Activated B cell treated with CpG ODN at 0.5 μM for 24 hours (primary cell): ENCODE measurements at regions of chr9 and their contacts with region 1.

Region 1: GRCh38 chr9:34500623-34501267 is 22.0 kb downstream of the ENHO start:
- DNase-seq: peak; percentile 55
- ATAC-seq: peak; percentile 95
- H3K4me3 Mint-ChIP-seq: no peak overlapping the region
- H3K27ac Mint-ChIP-seq: no peak overlapping the region
- H3K4me1 Mint-ChIP-seq: no peaks in the 10 kb centered on the region
- H3K27me3 Mint-ChIP-seq: peaks cover 13% of the 10 kb centered on the region
- CTCF ChIP-seq: peak; percentile 75

Region 2: DNA sequence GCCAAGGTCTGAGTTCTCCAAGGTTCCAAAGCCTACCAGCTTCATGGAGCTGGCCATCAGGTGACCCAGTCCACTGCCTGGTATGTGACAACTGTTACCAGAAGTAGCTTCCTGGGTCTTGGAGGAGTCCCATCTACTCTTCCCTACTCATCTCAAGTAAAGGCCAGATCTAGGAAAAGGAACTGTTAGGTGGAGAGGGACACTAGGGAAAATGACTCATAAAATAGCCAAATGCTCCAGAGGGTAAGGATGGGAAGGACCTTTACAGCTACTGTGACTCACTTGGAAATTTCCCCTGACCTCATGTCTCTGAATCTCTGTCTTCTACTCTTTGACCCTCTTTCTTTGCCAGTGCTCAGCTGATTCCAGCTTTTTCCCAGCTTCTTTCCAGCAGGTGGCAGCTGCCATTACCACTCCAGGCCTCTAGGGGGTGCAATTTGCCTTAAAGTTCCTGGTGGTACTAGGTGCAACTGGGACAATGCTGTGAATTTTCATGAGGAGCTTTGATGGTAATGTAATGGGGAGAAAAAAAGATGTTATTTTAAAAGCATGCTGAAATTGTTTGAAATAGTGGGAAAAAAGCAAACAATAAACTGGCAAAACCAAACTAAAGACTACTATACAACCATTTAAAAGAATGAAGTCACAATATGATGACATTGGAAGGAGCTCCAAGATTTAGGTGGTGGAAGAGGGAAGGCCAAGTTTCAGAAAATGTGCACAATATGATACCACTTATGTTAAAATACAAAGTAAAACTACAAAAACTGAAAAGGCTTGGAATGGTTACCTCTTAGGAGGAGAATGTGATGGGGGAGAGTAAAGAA is 97.0 kb before region 1 on chr9:
- CTCF ChIA-PET with region 1: interaction called, 28 read pairs
- POLR2A ChIA-PET with region 1: no interaction called
- intact Hi-C with region 1: loop called (anchors 1 kb)
- DNase-seq: no peak
- ATAC-seq: peak; percentile 56
- H3K4me3 Mint-ChIP-seq: no peak overlapping the region
- H3K27ac Mint-ChIP-seq: no peak overlapping the region
- H3K4me1 Mint-ChIP-seq: no peaks in the 10 kb centered on the region
- H3K27me3 Mint-ChIP-seq: no peaks in the 10 kb centered on the region
- CTCF ChIP-seq: peak; percentile 99